Heart left ventricle (tissue), 16 donors: ENCODE measurements at regions of chr4 and their contacts with region 1.

Region 1: DNA sequence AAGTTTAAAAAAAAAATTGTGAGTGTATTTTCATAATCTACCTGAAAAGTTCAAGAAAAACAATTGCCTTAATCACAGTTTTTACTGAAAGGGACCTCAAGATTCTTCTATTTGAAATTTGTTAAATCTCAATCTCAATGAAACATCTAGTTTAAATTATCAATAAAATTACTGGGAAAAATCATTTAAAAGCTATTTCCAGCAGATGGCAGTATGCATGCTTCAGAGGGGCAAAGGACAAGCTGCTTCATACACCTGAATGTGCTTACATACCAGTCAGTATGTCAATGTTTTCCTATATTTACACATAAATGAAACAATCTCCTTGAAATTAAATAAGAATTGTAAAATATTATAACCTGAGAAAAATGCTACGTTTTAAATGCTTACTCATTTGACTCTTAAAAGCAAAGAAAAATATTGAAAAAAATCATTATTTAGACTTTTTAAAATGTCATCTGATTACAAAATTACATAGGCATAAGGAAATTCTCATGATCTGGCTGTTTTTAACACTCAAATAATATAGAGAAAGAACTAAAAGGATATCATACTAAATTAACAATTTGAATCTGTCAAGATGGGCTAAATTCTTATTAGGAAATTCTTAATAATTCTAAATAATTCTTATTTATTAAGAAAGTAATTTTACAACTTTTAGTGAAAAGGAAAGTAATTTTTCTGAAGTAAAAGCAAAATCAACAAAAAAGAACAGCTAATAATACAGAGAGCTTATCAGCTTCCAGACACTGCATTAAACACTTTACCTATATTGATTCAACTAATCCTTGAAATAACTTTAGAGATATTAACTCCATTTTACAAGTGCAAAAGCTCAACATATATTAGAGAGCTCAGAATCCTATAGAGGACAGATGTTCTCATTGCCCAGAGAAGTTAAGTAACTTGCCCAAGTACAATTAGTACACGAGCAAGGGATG is 242.1 kb downstream of the ADAMTS3 start:
- DNase-seq: no peak
- ATAC-seq: no peak
- H3K4me3 ChIP-seq: no peak overlapping the region
- H3K27ac ChIP-seq: no peak overlapping the region
- H3K4me1 ChIP-seq: no peaks in the 10 kb centered on the region
- H3K27me3 ChIP-seq: no peaks in the 10 kb centered on the region
- CTCF ChIP-seq: peak; percentile 37 to 76 (median 56)
- POLR2A ChIP-seq: no peak

Region 2: DNA sequence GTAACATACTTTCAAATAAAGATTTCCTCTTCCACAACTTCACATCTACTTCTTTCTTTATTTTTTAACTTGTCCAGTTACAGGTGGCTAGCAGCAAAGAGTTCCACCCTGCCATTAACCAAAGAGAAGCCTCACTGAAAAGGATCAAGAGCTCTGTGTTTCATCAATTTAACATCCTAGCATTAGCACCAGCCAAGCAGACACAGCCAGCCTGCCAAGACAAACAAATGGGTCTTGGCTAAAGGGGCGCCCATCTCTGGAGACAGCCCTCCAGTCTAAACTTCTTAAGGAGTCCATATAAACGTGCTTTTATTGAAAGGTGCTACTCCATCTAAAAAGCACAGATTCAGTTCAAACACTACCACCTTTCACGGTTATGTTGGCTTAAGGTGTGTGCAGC is 136.8 kb after region 1 on chr4:
- intact Hi-C with region 1: loop called in 8 of 10 experiments (anchors 2 to 5 kb)
- DNase-seq: no peak
- ATAC-seq: no peak
- H3K4me3 ChIP-seq: no peak overlapping the region
- H3K27ac ChIP-seq: no peak overlapping the region
- H3K4me1 ChIP-seq: no peaks in the 10 kb centered on the region
- H3K27me3 ChIP-seq: no peaks in the 10 kb centered on the region
- CTCF ChIP-seq: no peak
- POLR2A ChIP-seq: no peak

Region 3: DNA sequence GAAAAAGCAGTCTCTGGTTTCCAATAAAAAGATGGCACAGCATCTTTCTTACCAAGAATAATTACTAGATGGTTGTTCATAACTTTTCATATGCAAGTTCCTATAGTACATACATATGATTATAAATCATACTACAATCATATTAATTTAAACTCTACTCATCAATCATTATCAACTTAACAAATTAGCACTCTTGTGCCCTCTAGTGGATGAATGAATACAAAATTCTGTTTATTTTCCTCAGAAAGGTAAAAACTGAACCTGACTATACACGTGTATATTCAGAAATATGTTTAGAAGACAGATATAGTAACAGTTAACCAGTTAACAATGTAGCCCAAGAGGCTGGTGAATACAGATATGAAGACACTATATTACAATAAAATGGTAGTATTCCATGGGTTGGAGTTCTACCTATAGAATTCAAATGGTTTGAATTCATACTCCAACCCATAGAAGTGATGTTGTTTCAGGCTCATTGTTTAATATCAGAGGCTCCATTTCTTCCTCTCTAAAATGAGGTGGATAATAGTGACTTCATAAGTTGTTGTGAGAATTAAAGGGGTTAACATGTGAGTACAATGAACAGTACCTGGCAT is 142.0 kb after region 1 on chr4:
- intact Hi-C with region 1: loop called (anchors 1 to 5 kb)
- DNase-seq: no peak
- ATAC-seq: no peak
- H3K4me3 ChIP-seq: no peak overlapping the region
- H3K27ac ChIP-seq: no peak overlapping the region
- H3K4me1 ChIP-seq: no peaks in the 10 kb centered on the region
- H3K27me3 ChIP-seq: no peaks in the 10 kb centered on the region
- CTCF ChIP-seq: peak; percentile 37 to 80 (median 60)
- POLR2A ChIP-seq: no peak

Region 4: DNA sequence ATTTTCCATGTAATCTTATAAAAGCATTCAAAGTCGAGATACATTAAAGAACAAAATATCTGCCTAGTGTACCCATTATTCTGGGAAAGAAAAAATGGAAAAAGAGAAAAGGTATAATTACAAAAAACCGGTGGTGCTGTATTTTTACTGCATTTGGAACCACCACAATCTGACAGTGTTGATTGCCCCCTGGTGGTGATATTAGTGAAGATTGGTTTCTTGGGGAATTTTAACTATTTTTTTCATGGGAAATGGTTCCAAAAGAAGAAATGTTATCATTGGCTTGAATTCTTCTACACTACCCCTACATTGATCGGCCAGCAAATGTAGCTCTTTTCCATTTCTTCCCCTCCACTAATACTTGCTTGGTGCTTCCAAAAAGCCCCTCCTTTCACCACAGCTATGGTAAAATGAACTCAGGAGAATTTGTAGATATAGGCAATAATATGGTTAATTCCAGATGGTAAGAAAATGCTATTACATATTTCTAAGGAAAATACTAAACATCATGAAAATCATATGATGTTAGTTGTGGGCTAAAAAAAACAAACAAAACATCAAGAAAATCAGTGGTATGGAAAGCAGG is 692.6 kb after region 1 on chr4:
- intact Hi-C with region 1: loop called in 1 of 10 experiments (anchors 10 kb)
- DNase-seq: no peak
- ATAC-seq: no peak
- H3K4me3 ChIP-seq: no peak overlapping the region
- H3K27ac ChIP-seq: no peak overlapping the region
- H3K4me1 ChIP-seq: no peaks in the 10 kb centered on the region
- H3K27me3 ChIP-seq: no peaks in the 10 kb centered on the region
- CTCF ChIP-seq: peak; percentile 46 to 86 (median 70)
- POLR2A ChIP-seq: no peak

Region 5: DNA sequence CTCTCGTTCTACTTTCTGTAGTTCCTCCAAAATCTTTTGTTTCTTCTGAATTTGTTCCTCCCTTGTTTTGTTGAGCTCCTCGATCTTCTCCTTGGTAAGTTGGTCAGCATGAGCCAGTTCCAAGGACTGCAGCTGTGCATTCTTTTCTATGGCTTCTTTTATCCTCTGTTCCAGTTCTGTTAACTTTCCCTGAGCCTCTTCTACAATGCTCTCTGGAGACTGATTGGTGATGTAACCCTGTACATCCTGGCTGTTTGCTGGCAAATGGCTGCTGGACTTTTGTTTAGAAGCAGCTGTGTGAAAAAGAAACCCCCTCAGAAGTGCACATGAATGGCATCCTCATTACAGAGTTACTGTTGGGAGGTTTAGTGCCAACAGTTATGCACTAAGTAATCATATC is 813.0 kb after region 1 on chr4:
- intact Hi-C with region 1: no loop called
- DNase-seq: no peak
- ATAC-seq: peak in 1 of 4 donors; percentile 24
- H3K4me3 ChIP-seq: no peak overlapping the region
- H3K27ac ChIP-seq: no peak overlapping the region
- H3K4me1 ChIP-seq: peaks cover 0 to 6% (median 0%) of the 10 kb centered on the region in 12 donors
- H3K27me3 ChIP-seq: no peaks in the 10 kb centered on the region
- CTCF ChIP-seq: no peak
- POLR2A ChIP-seq: no peak